Prostate gland (tissue), 2 donors: ENCODE measurements at regions of chr4 and their contacts with region 1.

Region 1: DNA sequence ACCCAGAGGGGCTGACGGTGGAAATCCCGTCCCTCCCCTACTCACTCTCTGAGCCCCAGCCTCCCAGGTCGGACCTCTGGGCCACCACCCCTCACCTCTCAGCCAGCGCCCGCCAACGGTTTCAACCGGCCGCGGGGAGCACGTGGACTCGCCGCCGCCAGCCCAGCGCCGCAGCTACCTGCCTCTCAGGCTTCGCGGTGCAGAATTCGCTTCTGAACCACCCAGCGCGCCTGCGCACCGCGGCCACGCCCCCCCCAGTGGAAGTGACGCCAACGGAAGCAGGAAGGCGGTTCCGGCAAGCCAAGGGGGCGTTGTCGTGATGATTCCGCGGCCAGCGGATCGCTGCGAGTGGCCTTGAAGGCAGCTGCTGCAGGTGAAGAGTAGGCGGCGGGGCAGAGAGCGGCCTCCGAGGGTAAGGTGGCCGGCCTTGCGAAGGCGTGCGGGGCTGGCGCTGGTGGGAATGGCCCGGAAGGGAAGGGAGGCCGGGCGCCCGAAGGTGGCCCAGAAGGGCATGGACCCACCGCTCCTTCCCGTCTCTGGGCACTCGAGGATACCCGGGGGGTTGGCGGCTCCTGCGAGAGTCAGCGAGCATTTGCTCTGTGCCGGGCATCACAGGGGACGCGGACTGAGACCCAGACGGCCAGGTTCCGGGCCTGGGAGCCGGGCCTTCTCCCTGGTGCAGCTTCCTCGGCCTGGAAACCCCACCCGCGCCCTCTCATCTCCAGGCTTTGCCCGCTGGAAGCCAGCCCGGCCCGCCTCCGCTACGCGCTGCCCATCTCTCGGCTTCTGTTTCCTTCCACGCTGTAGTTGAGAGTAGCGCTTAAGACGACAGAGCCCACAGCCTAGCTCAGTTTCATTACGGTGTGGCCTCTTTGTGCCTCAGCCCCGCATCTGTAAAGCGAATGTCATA is at the starts of genes LYAR and ZBTB49:
- DNase-seq: peak; percentile 90
- H3K4me3 ChIP-seq: peak within 1 kb of the TSS; percentile 75 to 85
- H3K27ac ChIP-seq: peak within 1 kb of the TSS; percentile 68 to 69
- H3K4me1 ChIP-seq: peaks cover 7% of the 10 kb centered on the region
- H3K27me3 ChIP-seq: no peaks in the 10 kb centered on the region
- CTCF ChIP-seq: peak in 1 of 4 experiments; percentile 10
- POLR2A ChIP-seq: peak; percentile 68
- total RNA-seq, gene LYAR: 9.0 to 19.1 TPM
- total RNA-seq, gene ZBTB49: 5.1 to 10.3 TPM

Region 2: GRCh38 chr4:4248029-4248884 is 41.9 kb before region 1 on chr4 and contains the start of gene TMEM128:
- intact Hi-C with region 1: loop called (anchors 2 kb)
- DNase-seq: peak; percentile 92
- H3K4me3 ChIP-seq: peak within 1 kb of the TSS; percentile 78 to 90
- H3K27ac ChIP-seq: peak within 1 kb of the TSS; percentile 90 to 93
- H3K4me1 ChIP-seq: peaks cover 10% of the 10 kb centered on the region
- H3K27me3 ChIP-seq: no peaks in the 10 kb centered on the region
- CTCF ChIP-seq: peak in 2 of 4 experiments; percentile 28 to 36
- POLR2A ChIP-seq: peak; percentile 33
- total RNA-seq, gene TMEM128: 14.7 to 35.8 TPM